Activated CD4-positive, alpha-beta T cell treated with anti-CD3 and anti-CD28 coated beads, Interleukin-2, amount 10 ng/mL, durations not matched to agents 24 days and 14 days (primary cell): ENCODE measurements at regions of chr7 and their contacts with region 1.

Region 1: GRCh38 chr7:149838224-149838947 is at the start of gene ZNF862:
- DNase-seq: peak; percentile 98
- H3K4me3 Mint-ChIP-seq: peak within 1 kb of the TSS; percentile 88
- H3K27ac Mint-ChIP-seq: peak within 1 kb of the TSS; percentile 83
- H3K4me1 Mint-ChIP-seq: peaks cover 18% of the 10 kb centered on the region
- H3K27me3 Mint-ChIP-seq: peaks cover 20% of the 10 kb centered on the region
- total RNA-seq, gene ZNF862: 16.6 and 18.3 TPM in 2 replicates

Region 2: DNA sequence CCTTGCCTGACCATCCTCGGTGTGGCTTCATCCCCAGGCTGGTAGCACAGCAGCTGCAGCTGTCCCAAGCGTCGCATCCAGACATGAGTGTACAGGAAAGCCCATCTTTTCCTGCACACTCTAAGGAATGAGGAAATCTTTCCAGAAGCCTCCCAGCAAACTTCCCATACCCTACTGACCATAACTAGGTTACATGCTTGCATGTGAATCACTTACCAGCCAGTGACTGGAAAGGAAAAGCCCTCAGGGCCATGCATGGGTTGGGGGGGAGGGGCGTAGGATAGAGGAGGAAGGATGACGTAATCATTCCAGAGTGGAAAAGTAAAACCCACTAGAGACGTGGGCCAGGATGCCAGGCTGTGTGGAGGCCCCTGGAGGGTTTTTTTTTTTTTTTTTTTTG is 617.8 kb before region 1 on chr7:
- intact Hi-C with region 1: no loop called
- DNase-seq: no peak
- H3K4me3 Mint-ChIP-seq: no peak overlapping the region
- H3K27ac Mint-ChIP-seq: no peak overlapping the region
- H3K4me1 Mint-ChIP-seq: no peaks in the 10 kb centered on the region
- H3K27me3 Mint-ChIP-seq: no peaks in the 10 kb centered on the region

Region 3: GRCh38 chr7:149569025-149569725 is 269.2 kb before region 1 on chr7:
- intact Hi-C with region 1: no loop called
- DNase-seq: no peak
- H3K4me3 Mint-ChIP-seq: no peak overlapping the region
- H3K27ac Mint-ChIP-seq: no peak overlapping the region
- H3K4me1 Mint-ChIP-seq: peaks cover 8% of the 10 kb centered on the region
- H3K27me3 Mint-ChIP-seq: no peaks in the 10 kb centered on the region

Region 4: DNA sequence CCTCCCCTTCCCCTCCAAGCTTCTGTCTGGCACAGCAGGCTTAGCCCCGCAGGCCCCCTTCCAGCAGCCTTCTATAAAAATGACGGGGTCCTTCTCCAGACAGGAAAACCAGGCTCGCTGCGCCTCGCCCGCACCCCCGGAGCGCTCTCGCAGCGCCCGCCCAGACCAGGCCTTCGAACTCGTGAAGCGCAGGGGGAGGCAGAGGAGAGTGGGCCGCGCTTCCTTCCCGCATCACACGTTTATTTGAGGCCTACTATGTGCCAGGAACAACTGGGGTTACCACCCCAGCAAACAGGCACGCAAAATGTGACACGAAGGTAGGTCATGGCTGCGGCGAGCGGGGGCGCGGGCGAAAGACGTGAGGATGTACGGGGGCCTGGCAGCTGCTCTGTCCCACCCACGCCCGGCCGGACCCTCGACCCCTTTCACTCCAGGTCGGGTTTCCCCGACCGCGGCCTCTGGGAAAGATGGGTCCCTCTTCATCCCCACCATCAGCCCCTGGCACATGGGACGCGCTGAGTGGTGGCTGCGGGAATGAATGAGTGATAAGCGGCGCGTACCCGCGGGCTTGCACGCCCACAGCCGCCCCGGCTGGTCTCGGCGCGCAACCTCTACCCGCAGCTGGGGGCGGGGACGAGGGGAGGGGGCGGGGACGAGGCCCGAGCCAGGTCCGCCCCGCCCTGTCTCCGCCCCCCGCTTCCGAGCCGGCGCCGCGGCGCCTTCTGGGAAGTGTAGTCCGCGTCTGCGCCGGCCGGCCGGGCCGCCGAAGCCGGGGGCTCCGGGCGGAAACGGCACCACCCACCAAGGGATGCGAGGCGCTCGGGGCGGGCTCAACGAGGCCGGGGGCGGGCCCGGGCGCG is 124.1 kb before region 1 on chr7:
- intact Hi-C with region 1: loop called (anchors 2 kb)
- DNase-seq: peak; percentile 95
- H3K4me3 Mint-ChIP-seq: peak overlapping the region; percentile 90
- H3K27ac Mint-ChIP-seq: peak overlapping the region; percentile 71
- H3K4me1 Mint-ChIP-seq: peaks cover 17% of the 10 kb centered on the region
- H3K27me3 Mint-ChIP-seq: no peaks in the 10 kb centered on the region

Region 5: DNA sequence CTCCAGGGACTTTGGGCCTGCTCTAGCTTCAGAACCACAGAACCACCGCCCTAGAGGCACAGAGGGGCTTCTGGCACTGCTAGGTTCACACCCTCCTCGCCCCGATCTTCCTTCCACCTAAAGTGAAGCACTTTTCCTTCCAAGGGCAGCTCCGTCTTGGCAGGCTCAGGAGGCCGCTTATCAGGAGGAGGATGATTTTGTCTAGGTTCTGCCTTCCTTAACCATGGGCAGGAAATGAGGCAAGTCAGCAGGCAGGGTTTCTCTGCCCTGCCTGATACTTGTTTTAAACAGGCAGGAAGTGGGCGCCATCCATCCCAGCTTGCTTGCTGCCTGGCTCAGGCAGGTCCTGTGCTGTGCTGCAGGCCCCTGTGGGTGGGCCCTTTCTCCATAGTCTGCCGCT is 27.1 kb after region 1 on chr7:
- intact Hi-C with region 1: loop called (anchors 1 kb)
- DNase-seq: peak; percentile 89
- H3K4me3 Mint-ChIP-seq: peak overlapping the region; percentile 58
- H3K27ac Mint-ChIP-seq: peak overlapping the region; percentile 93
- H3K4me1 Mint-ChIP-seq: peaks cover 62% of the 10 kb centered on the region
- H3K27me3 Mint-ChIP-seq: no peaks in the 10 kb centered on the region

Region 6: GRCh38 chr7:149873074-149873969 is 34.9 kb after region 1 on chr7 and contains the start of gene ATP6V0E2:
- intact Hi-C with region 1: loop called (anchors 1 kb)
- DNase-seq: peak; percentile 98
- H3K4me3 Mint-ChIP-seq: peak within 1 kb of the TSS; percentile 90
- H3K27ac Mint-ChIP-seq: peak within 1 kb of the TSS; percentile 92
- H3K4me1 Mint-ChIP-seq: peaks cover 71% of the 10 kb centered on the region
- H3K27me3 Mint-ChIP-seq: no peaks in the 10 kb centered on the region
- total RNA-seq, gene ATP6V0E2: 43.5 and 46.7 TPM in 2 replicates